Ascending aorta (tissue), 2 donors: ENCODE measurements at regions of chr2 and their contacts with region 1.

Region 1: GRCh38 chr2:9555297-9556141 is at the start of gene ADAM17:
- DNase-seq: peak; percentile 92 to 99
- H3K4me3 ChIP-seq: peak within 1 kb of the TSS; percentile 66 to 92
- H3K27ac ChIP-seq: peak within 1 kb of the TSS; percentile 95 to 99
- H3K4me1 ChIP-seq: peaks cover 15 to 49% of the 10 kb centered on the region in 2 donors
- H3K27me3 ChIP-seq: no peaks in the 10 kb centered on the region
- CTCF ChIP-seq: peak in 2 of 3 experiments; percentile 22 to 41
- total RNA-seq, gene ADAM17: 16.4 TPM

Region 2: DNA sequence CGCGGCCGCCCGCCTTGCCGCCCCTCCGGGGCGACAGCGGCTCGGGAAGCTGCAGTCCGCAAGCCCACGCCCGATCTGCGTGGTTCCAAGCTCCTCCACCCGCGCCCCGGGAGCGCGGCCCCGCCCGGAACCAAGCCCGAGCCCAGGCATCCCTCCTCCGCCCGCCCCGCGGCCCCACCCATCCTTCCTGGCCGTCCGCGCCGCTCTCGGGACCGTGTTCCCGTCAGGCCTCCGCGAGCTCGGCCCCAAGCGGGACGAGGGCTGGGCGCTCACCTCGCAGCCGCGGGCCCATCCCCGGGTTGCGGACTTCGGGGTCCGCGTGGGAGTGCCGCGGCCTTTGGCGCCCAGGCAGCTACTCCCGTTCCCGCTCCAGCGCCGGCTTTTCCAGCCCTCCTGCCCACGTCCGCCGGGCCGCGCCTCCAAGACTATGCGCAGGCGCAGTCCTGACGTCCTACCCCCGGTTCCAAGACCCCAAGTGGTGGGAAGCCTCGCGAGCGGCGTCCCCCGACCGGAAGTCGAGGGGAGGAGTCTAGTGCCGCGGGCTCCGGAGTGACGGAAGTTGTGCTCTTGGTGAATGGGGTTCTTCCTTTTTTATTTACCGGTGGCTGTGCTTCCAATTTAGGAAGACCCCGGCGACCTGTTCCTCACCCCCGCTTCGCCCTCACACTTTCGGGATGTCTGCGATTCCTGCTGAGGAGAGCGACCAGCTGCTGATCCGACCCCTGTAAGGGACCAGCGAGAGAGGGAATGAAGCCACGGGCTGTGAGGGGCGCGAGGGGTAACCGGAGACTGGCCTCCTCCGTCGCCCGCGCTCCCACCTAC is 132.2 kb before region 1 on chr2 and contains the starts of genes CPSF3 and ITGB1BP1:
- intact Hi-C with region 1: loop called (anchors 1 kb)
- DNase-seq: peak; percentile 85 to 98
- H3K4me3 ChIP-seq: peak within 1 kb of the TSS; percentile 83 to 93
- H3K27ac ChIP-seq: peak within 1 kb of the TSS; percentile 91 to 94
- H3K4me1 ChIP-seq: peaks cover 7 to 33% of the 10 kb centered on the region in 2 donors
- H3K27me3 ChIP-seq: no peaks in the 10 kb centered on the region
- CTCF ChIP-seq: no peak
- total RNA-seq, gene CPSF3: 5.3 TPM
- total RNA-seq, gene ITGB1BP1: 25.4 TPM

Region 3: GRCh38 chr2:9538000-9538507 is 17.5 kb before region 1 on chr2:
- intact Hi-C with region 1: loop called (anchors 1 kb)
- DNase-seq: no peak
- H3K4me3 ChIP-seq: no peak overlapping the region
- H3K27ac ChIP-seq: peak overlapping the region; percentile 46 to 61
- H3K4me1 ChIP-seq: peaks cover 0 to 9% of the 10 kb centered on the region in 2 donors
- H3K27me3 ChIP-seq: no peaks in the 10 kb centered on the region
- CTCF ChIP-seq: no peak

Region 4: GRCh38 chr2:9613291-9613690 is 57.8 kb after region 1 on chr2:
- intact Hi-C with region 1: loop called (anchors 5 kb)
- DNase-seq: no peak
- H3K4me3 ChIP-seq: no peak overlapping the region
- H3K27ac ChIP-seq: peak overlapping the region in 1 of 2 donors; percentile 37
- H3K4me1 ChIP-seq: peaks cover 0 to 31% of the 10 kb centered on the region in 2 donors
- H3K27me3 ChIP-seq: no peaks in the 10 kb centered on the region
- CTCF ChIP-seq: no peak

Region 5: GRCh38 chr2:9693211-9693520 is 137.6 kb after region 1 on chr2:
- intact Hi-C with region 1: loop called (anchors 10 kb)
- DNase-seq: peak; percentile 75 to 93
- H3K4me3 ChIP-seq: peak overlapping the region; percentile 9 to 34
- H3K27ac ChIP-seq: peak overlapping the region; percentile 70 to 85
- H3K4me1 ChIP-seq: peaks cover 4 to 14% of the 10 kb centered on the region in 2 donors
- H3K27me3 ChIP-seq: no peaks in the 10 kb centered on the region
- CTCF ChIP-seq: no peak

Region 6: DNA sequence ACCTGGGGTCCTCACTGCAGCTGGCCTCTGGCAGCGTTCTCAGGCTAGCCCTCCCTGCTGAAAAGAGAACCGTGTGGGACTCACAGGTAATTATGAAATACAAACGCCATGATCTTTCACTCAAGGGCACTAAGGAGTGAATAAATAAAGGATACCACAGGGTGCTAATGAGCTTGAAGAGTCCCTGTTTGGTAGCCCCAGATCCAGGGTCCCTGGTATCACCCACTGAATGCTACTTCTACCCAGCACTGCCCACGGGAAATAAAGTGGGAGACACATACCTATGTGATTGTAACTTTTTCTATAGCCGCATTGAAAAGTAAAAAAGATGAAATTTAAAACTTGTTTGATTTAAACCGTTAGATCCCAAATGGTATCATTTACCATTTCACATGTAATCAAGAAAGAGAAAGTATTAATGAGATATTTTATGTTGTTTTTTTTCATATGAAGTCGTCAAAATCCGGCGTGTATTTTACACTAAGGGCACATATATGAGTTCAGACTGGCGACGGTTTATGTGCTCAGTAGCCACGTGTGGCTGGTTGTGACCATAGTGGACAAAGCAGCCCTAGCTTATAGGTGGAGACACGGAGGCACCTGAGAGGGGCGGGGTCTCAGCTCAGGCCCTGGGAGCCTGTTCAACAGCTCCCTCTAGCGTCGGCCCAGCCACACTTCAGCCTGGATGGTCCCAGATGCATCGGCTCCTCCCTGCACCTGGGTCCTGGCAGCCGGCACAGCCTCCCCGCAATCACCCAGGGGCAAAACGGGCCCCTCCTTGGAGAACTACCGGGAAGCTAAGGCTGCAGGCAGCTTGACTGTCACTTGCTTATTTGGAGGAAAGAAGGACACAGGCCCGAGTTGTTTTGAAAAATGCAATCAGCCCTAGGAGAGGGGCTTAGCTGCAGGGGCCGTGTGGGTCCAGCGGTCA is 853.4 kb after region 1 on chr2:
- intact Hi-C with region 1: loop called (anchors 5 kb)
- DNase-seq: peak in 1 of 2 donors; percentile 86
- H3K4me3 ChIP-seq: no peak overlapping the region
- H3K27ac ChIP-seq: peak overlapping the region in 1 of 2 donors; percentile 52
- H3K4me1 ChIP-seq: peaks cover 24 to 43% of the 10 kb centered on the region in 2 donors
- H3K27me3 ChIP-seq: no peaks in the 10 kb centered on the region
- CTCF ChIP-seq: peak; percentile 91 to 94 (median 91)